GM10248 (cell line): ENCODE measurements at regions of chr19 and their contacts with region 1.

Region 1: GRCh38 chr19:45670670-45671453 is 2.8 kb downstream of the GIPR start:
- DNase-seq: peak; percentile 99
- CTCF ChIP-seq: no peak

Region 2: GRCh38 chr19:45630493-45630919 is 40.4 kb before region 1 on chr19:
- CTCF ChIA-PET with region 1: no interaction called
- POLR2A ChIA-PET with region 1: no interaction called
- DNase-seq: peak; percentile 65
- CTCF ChIP-seq: no peak

Region 3: GRCh38 chr19:45681391-45682015 is 10.6 kb after region 1 on chr19:
- CTCF ChIA-PET with region 1: interaction called, 46 read pairs
- POLR2A ChIA-PET with region 1: no interaction called
- DNase-seq: peak; percentile 85
- CTCF ChIP-seq: peak; percentile 89